ENCODE measurements at regions of chr2 and their contacts with region 1.

Region 1: DNA sequence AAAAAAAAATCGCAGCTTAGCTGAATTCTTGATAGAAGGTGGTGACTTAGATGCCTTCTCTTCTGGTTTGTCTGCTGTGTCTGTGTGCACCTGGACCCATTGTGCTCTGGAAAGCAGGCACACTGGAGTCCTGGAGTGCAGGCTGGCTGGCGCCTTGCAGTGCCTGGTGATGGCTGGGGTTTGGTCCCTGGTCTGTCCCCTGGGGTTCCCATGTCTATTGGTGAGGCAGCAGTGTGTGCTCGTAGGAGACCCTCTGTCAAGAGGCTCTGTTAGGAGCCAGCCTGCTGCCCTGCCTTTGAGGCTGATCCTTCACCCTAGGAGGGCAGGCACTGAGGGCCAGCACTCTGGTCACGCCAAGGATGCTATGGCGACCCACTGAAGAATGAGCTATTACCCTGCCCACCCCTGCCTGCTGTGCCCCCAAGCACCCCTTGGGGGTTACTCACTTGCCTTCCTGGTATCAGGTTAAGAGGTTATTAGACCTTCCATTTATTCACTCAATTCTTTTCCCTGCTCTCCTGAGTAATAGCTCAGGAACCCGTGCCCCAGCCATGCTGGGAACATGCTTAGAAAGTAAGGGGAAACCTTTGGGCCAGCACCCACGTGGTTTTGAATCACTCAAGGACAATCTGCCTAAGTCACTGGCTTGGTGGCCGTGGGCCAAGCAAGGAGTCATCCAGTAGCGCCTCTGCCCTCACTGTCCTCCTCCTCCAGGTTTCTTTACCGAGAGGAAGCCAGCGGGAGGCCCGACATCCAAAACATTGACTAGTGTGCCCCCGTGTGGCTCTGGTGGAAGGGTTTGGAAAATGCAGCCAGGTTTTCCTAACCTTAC is 284.5 kb downstream of the PRKCE start:
- DNase-seq: peak; percentile 98
- H3K4me3 ChIP-seq: no peak overlapping the region
- H3K27ac ChIP-seq: peak overlapping the region in 1 of 2 donors; percentile 41
- H3K4me1 ChIP-seq: peaks cover 10% of the 10 kb centered on the region
- H3K27me3 ChIP-seq: no peaks in the 10 kb centered on the region
- CTCF ChIP-seq: peak; percentile 55 to 91 (median 82)
- POLR2A ChIP-seq: no peak

Region 2: DNA sequence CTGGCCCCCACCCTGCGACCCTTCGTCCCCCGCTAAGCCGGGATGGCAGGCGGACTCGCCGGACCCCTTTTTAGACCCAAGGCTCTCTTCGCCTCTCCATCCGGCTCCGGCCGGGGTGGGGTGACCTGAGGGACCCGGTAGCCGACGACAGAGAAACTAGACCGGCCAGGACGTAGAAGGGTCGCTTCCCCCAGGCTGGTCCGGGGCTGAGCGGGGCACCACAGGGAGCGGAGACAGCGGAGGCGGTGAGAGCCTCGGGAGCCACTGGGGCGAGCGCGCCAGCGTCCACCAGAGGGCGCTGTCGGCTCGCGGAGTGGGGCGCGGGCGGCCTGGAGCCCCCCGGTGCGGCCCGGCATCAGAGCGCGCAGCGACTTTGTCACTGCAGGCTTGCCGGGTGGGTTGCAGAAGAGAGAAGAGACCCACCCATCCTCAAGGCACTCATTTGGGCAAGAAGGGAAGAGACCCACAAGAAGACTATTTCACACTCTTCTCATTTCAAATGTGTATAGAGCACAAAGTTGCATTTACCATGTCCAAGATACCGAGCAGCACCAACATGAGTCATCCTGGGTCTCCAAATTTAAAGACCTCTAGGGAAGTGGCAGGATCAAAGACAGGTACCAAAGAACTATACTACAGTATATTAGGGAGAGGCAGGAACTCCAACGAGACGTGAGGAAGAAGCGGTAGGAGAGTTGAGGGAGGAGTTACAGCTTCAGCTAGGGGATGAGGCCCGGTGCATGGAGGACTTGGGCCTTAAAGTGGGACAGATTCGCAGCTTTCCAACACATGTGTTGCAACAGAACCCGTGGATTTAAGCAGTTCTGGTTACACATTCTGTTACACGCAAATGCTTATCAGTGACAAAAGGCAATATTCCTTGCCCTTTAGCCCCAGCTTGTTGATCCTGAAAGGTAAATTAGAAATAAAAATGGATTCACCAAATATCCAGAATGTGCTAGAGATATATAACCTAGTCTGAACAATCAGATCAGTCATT is 292.2 kb before region 1 on chr2:
- intact Hi-C with region 1: loop called (anchors 5 kb)
- DNase-seq: peak; percentile 70
- H3K4me3 ChIP-seq: peak overlapping the region; percentile 48 to 55
- H3K27ac ChIP-seq: no peak overlapping the region
- H3K4me1 ChIP-seq: no peaks in the 10 kb centered on the region
- H3K27me3 ChIP-seq: no peaks in the 10 kb centered on the region
- CTCF ChIP-seq: peak; percentile 98 to 99 (median 98)
- POLR2A ChIP-seq: no peak

Region 3: DNA sequence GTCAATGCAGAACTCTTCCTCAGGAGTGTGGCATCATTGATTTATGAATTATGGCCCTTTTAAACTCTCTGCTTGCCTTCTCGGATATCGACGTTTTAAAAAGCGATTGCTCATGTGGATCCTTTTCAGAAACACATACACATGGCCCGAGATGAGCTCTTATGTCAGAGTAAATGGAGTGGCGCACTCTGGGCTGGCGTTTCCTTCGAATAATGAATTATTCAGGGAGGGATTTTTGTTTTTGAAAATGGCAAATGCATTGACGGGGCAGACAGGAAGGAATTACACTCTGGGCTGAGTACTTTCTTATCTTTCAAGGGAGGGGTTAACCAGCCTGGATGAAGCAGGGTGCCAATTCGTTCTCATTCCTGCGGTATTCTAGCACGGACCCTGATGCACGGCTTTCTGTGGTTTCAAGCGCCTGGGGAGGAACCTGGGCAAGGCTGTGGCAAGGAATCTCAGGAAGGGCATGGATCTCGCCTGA is 141.8 kb before region 1 on chr2:
- intact Hi-C with region 1: loop called (anchors 10 kb)
- DNase-seq: no peak
- H3K4me3 ChIP-seq: no peak overlapping the region
- H3K27ac ChIP-seq: no peak overlapping the region
- H3K4me1 ChIP-seq: peaks cover 16% of the 10 kb centered on the region
- H3K27me3 ChIP-seq: no peaks in the 10 kb centered on the region
- CTCF ChIP-seq: no peak
- POLR2A ChIP-seq: no peak

Region 4: DNA sequence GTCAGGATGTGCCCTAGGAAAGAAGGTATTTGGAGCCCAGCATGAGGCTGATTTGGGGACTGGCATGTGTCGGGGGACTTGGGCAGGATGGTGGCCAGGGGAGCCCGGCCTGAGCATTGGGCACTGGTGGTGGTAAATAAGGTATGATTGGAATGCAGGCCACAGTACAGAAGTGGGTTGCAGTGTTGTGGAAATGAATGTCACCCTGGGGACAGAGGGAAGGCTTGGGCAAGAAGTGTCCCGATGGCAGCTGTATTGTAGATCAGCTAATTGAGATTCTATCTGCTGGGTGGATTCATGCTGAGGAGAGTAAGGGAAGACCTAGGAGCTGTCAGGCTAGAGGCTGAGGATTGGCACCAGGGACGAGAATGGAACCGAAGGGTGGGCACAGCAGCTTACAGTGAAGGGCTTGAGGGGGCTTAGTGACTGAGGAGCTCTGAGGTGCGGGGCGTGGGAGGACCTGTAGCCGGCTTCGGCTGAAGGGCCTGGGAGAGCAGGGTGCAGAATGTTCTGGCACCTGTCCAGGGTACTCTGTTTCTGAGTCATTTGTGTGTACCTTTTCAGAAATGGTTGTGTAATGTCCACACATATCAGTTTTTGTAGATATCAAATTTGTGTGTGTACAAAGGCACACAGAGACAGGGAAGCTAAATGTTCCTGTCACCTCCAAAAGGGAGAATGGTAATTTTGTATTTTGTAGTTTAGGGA is 114.3 kb before region 1 on chr2:
- intact Hi-C with region 1: no loop called
- DNase-seq: peak; percentile 74
- H3K4me3 ChIP-seq: no peak overlapping the region
- H3K27ac ChIP-seq: peak overlapping the region in 1 of 2 donors; percentile 8
- H3K4me1 ChIP-seq: peaks cover 10% of the 10 kb centered on the region
- H3K27me3 ChIP-seq: no peaks in the 10 kb centered on the region
- CTCF ChIP-seq: no peak
- POLR2A ChIP-seq: no peak